Activated CD4-positive, alpha-beta T cell treated with anti-CD3 and anti-CD28 coated beads for 36 hours (primary cell): ENCODE measurements at regions of chr3 and their contacts with region 1.

Region 1: GRCh38 chr3:105812194-105812586 is 56.6 kb downstream of the CBLB start:
- DNase-seq: no peak
- ATAC-seq: no peak
- H3K4me3 Mint-ChIP-seq: no peak overlapping the region
- H3K27ac Mint-ChIP-seq: peak overlapping the region; percentile 20
- H3K4me1 Mint-ChIP-seq: peaks cover 60% of the 10 kb centered on the region
- H3K27me3 Mint-ChIP-seq: no peaks in the 10 kb centered on the region

Region 2: DNA sequence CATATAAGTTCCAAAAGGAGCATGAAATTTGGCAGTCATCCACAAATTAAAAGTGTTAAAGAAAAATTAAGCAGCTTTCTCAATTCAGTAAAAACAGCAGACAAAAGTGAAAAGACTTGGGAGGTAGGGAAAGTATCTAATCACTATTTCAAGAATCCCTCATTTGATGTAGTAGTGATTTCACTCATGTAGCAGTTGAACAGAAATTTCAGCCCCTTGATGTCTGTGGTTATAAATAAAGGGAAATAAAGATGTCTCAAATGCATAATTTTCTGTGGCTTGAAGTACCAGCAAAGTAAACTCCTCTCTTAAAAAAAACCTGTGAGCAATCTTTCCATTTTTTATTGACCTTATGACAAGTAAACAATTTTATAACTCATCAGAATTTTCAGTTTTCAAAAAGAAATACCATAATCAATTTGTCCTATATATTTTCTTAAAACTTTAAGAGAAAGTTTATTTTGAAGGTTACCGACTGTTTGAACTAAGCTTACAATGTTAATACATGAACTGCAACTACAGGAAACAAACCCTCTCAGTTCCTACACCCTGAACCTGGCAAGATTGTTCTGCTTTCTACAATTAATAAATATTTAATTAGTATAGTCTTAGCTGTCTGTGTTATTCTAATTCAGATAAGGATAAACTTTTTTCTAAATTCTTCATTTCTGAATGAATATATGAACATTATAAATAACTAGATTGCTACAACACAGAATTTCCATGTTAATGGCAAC is 37.6 kb before region 1 on chr3:
- CTCF ChIA-PET with region 1: no interaction called
- POLR2A ChIA-PET with region 1: no interaction called
- intact Hi-C with region 1: loop called in 1 of 2 experiments (anchors 5 kb)
- DNase-seq: no peak
- ATAC-seq: peak; percentile 72
- H3K4me3 Mint-ChIP-seq: peak overlapping the region; percentile 12
- H3K27ac Mint-ChIP-seq: peak overlapping the region; percentile 78
- H3K4me1 Mint-ChIP-seq: peaks cover 81% of the 10 kb centered on the region
- H3K27me3 Mint-ChIP-seq: no peaks in the 10 kb centered on the region